Activated CD4-positive, alpha-beta T cell treated with anti-CD3 and anti-CD28 coated beads for 36 hours (primary cell): ENCODE measurements at regions of chr5 and their contacts with region 1.

Region 1: GRCh38 chr5:117454716-117455596 is 880.3 kb upstream of the SEMA6A start:
- DNase-seq: peak; percentile 68
- ATAC-seq: peak; percentile 84
- H3K4me3 Mint-ChIP-seq: no peak overlapping the region
- H3K27ac Mint-ChIP-seq: no peak overlapping the region
- H3K4me1 Mint-ChIP-seq: peaks cover 4% of the 10 kb centered on the region
- H3K27me3 Mint-ChIP-seq: peaks cover 4% of the 10 kb centered on the region

Region 2: DNA sequence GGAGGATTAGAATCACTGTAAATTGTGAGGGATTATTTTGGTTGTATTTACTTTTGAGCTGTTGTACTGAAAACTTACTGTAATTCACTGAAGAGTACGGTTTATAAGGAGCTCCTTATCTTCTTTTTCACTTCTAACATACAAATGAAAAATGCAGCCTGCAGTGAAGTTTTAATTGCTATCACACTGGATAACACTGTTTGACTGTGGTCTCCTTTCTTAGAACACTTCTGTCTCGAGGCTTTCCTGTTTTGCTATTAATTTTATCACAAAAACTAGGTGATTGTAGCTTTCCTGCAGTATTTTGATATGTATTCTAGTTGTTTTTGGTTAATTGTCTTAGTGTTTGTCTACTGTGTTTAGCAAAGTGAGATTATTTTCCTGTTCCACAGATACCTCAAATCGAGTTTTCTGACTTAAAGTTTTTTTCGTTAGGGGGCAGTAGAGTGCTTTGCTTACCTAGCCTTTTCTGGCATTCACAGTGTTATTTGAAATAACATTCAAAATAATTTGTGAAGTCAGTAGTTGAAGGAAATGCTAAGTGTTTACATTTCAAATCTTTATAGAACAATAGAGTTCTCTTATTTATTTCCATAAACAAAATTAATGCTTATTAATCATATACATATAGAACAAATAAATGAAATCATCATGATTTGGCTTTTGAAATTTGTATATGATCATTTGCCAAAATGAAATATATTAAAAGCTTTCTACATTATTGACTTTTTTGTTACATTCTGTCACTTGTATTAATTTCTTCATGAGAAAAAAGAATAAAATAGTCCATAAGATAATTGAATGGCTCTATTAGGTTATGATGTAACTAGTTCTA is 1317.2 kb before region 1 on chr5:
- CTCF ChIA-PET with region 1: interaction called, 3 read pairs
- POLR2A ChIA-PET with region 1: no interaction called
- intact Hi-C with region 1: loop called in 1 of 2 experiments (anchors 10 kb)
- DNase-seq: no peak
- ATAC-seq: no peak
- H3K4me3 Mint-ChIP-seq: no peak overlapping the region
- H3K27ac Mint-ChIP-seq: no peak overlapping the region
- H3K4me1 Mint-ChIP-seq: peaks cover 18% of the 10 kb centered on the region
- H3K27me3 Mint-ChIP-seq: no peaks in the 10 kb centered on the region

Region 3: GRCh38 chr5:117218785-117219184 is 236.2 kb before region 1 on chr5:
- CTCF ChIA-PET with region 1: no interaction called
- POLR2A ChIA-PET with region 1: no interaction called
- intact Hi-C with region 1: no loop called
- DNase-seq: no peak
- ATAC-seq: no peak
- H3K4me3 Mint-ChIP-seq: no peak overlapping the region
- H3K27ac Mint-ChIP-seq: no peak overlapping the region
- H3K4me1 Mint-ChIP-seq: no peaks in the 10 kb centered on the region
- H3K27me3 Mint-ChIP-seq: no peaks in the 10 kb centered on the region

Region 4: DNA sequence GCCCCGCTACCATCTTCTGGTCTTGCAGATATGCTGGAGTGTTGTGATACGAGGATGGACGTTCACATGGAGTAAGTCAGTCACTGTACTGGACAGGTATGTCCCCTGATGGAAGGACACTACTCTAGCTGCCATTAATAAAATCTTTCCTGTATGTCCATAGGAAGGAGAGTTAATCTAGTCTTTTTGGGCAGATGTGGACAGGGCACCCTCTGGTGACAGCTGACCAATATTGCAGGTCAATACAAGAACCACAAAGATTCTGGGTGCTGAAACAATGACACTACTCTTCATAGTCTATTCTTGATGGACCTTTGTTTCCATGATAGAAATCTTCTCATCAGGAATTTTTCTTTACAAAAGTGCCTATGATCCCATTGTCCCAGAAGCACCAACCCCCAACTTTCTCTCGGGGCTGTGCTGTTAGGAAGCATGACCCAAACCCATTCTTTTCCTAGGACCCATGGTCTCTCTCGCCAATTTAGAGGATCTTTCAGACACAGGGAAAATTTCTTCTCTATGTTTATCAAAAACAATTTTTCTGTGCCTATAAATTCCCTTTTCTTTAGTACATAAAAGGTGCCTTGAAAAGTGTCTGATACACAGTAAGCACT is 1156.5 kb after region 1 on chr5:
- CTCF ChIA-PET with region 1: no interaction called
- POLR2A ChIA-PET with region 1: no interaction called
- intact Hi-C with region 1: loop called in 1 of 2 experiments (anchors 5 kb)
- DNase-seq: peak; percentile 28
- ATAC-seq: no peak
- H3K4me3 Mint-ChIP-seq: no peak overlapping the region
- H3K27ac Mint-ChIP-seq: no peak overlapping the region
- H3K4me1 Mint-ChIP-seq: no peaks in the 10 kb centered on the region
- H3K27me3 Mint-ChIP-seq: no peaks in the 10 kb centered on the region

Region 5: GRCh38 chr5:118791926-118792734 is 1337.2 kb after region 1 on chr5:
- CTCF ChIA-PET with region 1: interaction called, 6 read pairs
- POLR2A ChIA-PET with region 1: no interaction called
- intact Hi-C with region 1: loop called in 1 of 2 experiments (anchors 1 kb)
- DNase-seq: peak; percentile 24
- ATAC-seq: peak; percentile 72
- H3K4me3 Mint-ChIP-seq: no peak overlapping the region
- H3K27ac Mint-ChIP-seq: no peak overlapping the region
- H3K4me1 Mint-ChIP-seq: no peaks in the 10 kb centered on the region
- H3K27me3 Mint-ChIP-seq: no peaks in the 10 kb centered on the region

Region 6: GRCh38 chr5:118956727-118957126 is 1501.8 kb after region 1 on chr5:
- CTCF ChIA-PET with region 1: interaction called, 3 read pairs
- POLR2A ChIA-PET with region 1: no interaction called
- intact Hi-C with region 1: loop called in 1 of 2 experiments (anchors 10 kb)
- DNase-seq: no peak
- ATAC-seq: no peak
- H3K4me3 Mint-ChIP-seq: no peak overlapping the region
- H3K27ac Mint-ChIP-seq: no peak overlapping the region
- H3K4me1 Mint-ChIP-seq: no peaks in the 10 kb centered on the region
- H3K27me3 Mint-ChIP-seq: no peaks in the 10 kb centered on the region